Sigmoid colon (tissue), 7 donors: ENCODE measurements at regions of chr14 and their contacts with region 1.

Region 1: GRCh38 chr14:32457213-32457920 is 128.3 kb downstream of the AKAP6 start:
- DNase-seq: peak; percentile 91
- H3K4me3 ChIP-seq: no peak overlapping the region
- H3K27ac ChIP-seq: peak overlapping the region; percentile 72 to 88 (median 81)
- H3K4me1 ChIP-seq: peaks cover 0 to 47% (median 37%) of the 10 kb centered on the region in 4 donors
- H3K27me3 ChIP-seq: no peaks in the 10 kb centered on the region
- CTCF ChIP-seq: no peak
- EP300 ChIP-seq: peak; percentile 95 to 99 (median 98)
- POLR2A ChIP-seq: no peak

Region 2: DNA sequence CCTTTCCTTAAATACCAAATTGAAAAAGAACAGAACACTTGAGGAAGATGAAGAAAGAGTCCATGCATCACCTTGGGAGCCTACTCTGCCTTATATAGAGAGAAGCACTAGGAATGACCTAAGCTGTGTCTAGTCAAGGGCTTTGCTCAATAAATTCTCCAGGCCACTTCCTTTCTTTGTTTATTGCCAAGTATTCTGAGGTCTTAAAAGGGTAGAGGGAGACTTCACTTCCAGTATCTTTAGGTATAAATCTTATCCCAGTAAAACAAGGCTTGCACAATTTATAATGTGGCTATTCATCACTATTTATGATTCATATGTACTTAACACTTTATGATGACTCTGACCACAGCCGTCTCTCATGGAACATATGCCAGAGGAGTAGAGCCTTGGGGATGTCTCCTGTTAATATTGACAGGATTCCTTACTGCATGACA is 465.3 kb before region 1 on chr14:
- intact Hi-C with region 1: loop called (anchors 5 kb)
- DNase-seq: no peak
- H3K4me3 ChIP-seq: no peak overlapping the region
- H3K27ac ChIP-seq: peak overlapping the region; percentile 4 to 73 (median 48)
- H3K4me1 ChIP-seq: peaks cover 0 to 50% (median 38%) of the 10 kb centered on the region in 4 donors
- H3K27me3 ChIP-seq: no peaks in the 10 kb centered on the region
- CTCF ChIP-seq: no peak
- EP300 ChIP-seq: peak; percentile 52 to 93 (median 80)
- POLR2A ChIP-seq: no peak

Region 3: GRCh38 chr14:32350020-32350419 is 107.3 kb before region 1 on chr14:
- intact Hi-C with region 1: no loop called
- DNase-seq: no peak
- H3K4me3 ChIP-seq: no peak overlapping the region
- H3K27ac ChIP-seq: no peak overlapping the region
- H3K4me1 ChIP-seq: no peaks in the 10 kb centered on the region
- H3K27me3 ChIP-seq: no peaks in the 10 kb centered on the region
- CTCF ChIP-seq: no peak
- EP300 ChIP-seq: no peak
- POLR2A ChIP-seq: no peak

Region 4: GRCh38 chr14:32421781-32422180 is 35.6 kb before region 1 on chr14:
- intact Hi-C with region 1: loop called (anchors 5 kb)
- DNase-seq: no peak
- H3K4me3 ChIP-seq: no peak overlapping the region
- H3K27ac ChIP-seq: no peak overlapping the region
- H3K4me1 ChIP-seq: peaks cover 0 to 33% (median 16%) of the 10 kb centered on the region in 4 donors
- H3K27me3 ChIP-seq: no peaks in the 10 kb centered on the region
- CTCF ChIP-seq: no peak
- EP300 ChIP-seq: no peak
- POLR2A ChIP-seq: no peak

Region 5: GRCh38 chr14:32603992-32604565 is 146.7 kb after region 1 on chr14:
- intact Hi-C with region 1: no loop called
- DNase-seq: no peak
- H3K4me3 ChIP-seq: no peak overlapping the region
- H3K27ac ChIP-seq: no peak overlapping the region
- H3K4me1 ChIP-seq: peaks cover 0 to 38% (median 19%) of the 10 kb centered on the region in 4 donors
- H3K27me3 ChIP-seq: no peaks in the 10 kb centered on the region
- CTCF ChIP-seq: no peak
- EP300 ChIP-seq: no peak
- POLR2A ChIP-seq: no peak

Region 6: DNA sequence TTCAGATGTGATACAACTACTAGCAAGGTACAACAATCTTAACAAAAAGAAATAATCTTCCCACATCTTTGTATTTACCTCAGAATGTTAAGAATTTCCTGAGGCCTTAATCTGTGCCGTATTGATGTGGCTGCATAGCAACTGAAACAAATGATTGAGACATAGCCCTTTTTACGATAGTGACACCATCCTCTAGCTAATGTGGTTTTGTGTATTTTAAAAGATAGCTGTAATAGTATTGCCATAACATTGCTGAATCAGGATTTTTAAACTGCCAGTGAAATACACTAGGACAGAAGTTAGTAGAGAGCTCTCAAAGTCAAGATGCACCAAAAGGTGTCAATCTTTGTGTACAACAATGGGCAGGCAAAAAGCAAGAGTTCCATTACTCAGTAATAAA is 493.2 kb after region 1 on chr14:
- intact Hi-C with region 1: no loop called
- DNase-seq: no peak
- H3K4me3 ChIP-seq: no peak overlapping the region
- H3K27ac ChIP-seq: no peak overlapping the region
- H3K4me1 ChIP-seq: peaks cover 0 to 9% (median 0%) of the 10 kb centered on the region in 4 donors
- H3K27me3 ChIP-seq: no peaks in the 10 kb centered on the region
- CTCF ChIP-seq: no peak
- EP300 ChIP-seq: no peak
- POLR2A ChIP-seq: no peak